ENCODE measurements at regions of chr16 and their contacts with region 1.

Region 1: GRCh38 chr16:63018581-63019223 is 982.5 kb upstream of the CDH8 start:
- DNase-seq: no peak
- H3K4me3 ChIP-seq: no peak overlapping the region
- H3K27ac ChIP-seq: no peak overlapping the region
- H3K4me1 ChIP-seq: no peaks in the 10 kb centered on the region
- H3K27me3 ChIP-seq: no peaks in the 10 kb centered on the region
- CTCF ChIP-seq: no peak
- EP300 ChIP-seq: no peak
- POLR2A ChIP-seq: no peak

Region 2: DNA sequence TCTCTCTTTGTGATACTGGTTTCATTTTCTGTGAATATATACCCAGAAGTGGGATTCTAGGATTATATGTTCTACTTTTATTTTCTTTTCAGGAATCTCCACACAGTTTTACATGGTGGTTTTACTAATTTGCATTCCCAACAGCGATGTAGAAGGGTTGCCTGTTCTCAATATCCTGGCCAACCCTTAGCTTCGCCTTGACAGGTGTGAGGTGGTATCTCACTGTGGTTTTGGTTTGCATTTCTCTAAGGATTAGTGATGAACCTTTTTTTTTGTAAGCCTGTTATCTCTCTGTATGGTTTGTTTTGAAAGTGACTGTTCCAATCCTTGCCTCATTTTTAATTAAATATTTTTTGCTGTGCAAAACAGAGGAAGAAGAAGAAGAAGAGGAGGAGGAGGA is 1920.2 kb before region 1 on chr16:
- in situ Hi-C with region 1: no loop called
- intact Hi-C with region 1: no loop called
- DNase-seq: no peak
- H3K4me3 ChIP-seq: no peak overlapping the region
- H3K27ac ChIP-seq: no peak overlapping the region
- H3K4me1 ChIP-seq: no peaks in the 10 kb centered on the region
- H3K27me3 ChIP-seq: no peaks in the 10 kb centered on the region
- CTCF ChIP-seq: no peak
- EP300 ChIP-seq: no peak
- POLR2A ChIP-seq: no peak

Region 3: DNA sequence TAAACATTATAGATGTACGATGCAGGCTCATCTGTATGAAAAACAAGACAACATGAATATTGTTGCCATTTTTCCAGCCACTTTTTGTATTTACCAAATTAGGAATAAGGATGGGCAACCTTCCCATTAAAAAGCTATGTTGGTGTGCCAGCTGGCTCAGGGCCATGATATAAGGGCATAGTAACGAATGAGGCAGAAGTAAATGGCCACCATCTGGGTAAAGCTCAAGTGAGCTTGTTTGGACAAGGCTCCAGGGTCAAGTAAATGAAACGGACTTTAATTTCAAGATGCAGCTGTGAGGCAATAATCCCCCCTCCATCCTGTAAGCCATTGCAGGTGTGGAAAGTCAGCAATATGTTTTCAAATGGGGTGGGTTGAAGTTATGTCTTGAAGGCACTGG is 51.5 kb before region 1 on chr16:
- in situ Hi-C with region 1: loop called in 1 of 4 experiments (anchors 10 kb)
- intact Hi-C with region 1: no loop called
- DNase-seq: no peak
- H3K4me3 ChIP-seq: no peak overlapping the region
- H3K27ac ChIP-seq: no peak overlapping the region
- H3K4me1 ChIP-seq: no peaks in the 10 kb centered on the region
- H3K27me3 ChIP-seq: no peaks in the 10 kb centered on the region
- CTCF ChIP-seq: no peak
- EP300 ChIP-seq: no peak
- POLR2A ChIP-seq: no peak

Measured in transverse colon (tissue), 4 donors.